Ascending aorta (tissue), 2 donors: ENCODE measurements at regions of chr1 and their contacts with region 1.

Region 1: GRCh38 chr1:206507284-206508129 is at the start of gene RASSF5:
- DNase-seq: peak; percentile 72 to 94
- H3K4me3 ChIP-seq: peak within 1 kb of the TSS; percentile 96 to 98
- H3K27ac ChIP-seq: peak within 1 kb of the TSS; percentile 65 to 75
- H3K4me1 ChIP-seq: peaks cover 8 to 44% of the 10 kb centered on the region in 2 donors
- H3K27me3 ChIP-seq: no peaks in the 10 kb centered on the region
- CTCF ChIP-seq: no peak
- total RNA-seq, gene RASSF5: 8.9 TPM

Region 2: DNA sequence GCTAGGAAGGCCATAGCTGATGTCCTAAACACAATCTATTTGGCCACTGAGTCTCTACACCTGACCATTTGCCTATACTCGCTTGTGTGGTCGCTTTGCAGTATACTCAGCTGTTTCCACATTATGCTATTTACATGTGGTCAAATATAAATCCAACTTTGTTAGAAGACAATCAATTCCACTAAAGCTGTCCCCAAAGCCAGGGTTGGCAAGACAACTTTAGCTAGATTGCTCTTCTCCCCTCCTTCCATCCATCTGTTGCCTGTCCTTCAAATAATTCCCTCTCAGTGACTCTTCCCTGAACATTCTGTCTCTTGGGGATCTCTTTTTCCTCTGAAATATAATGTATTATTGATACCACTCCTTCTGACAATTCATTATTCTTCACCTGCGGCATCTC is 420.4 kb before region 1 on chr1:
- intact Hi-C with region 1: no loop called
- DNase-seq: no peak
- H3K4me3 ChIP-seq: no peak overlapping the region
- H3K27ac ChIP-seq: no peak overlapping the region
- H3K4me1 ChIP-seq: no peaks in the 10 kb centered on the region
- H3K27me3 ChIP-seq: no peaks in the 10 kb centered on the region
- CTCF ChIP-seq: no peak

Region 3: GRCh38 chr1:206489980-206490770 is 17.3 kb before region 1 on chr1:
- intact Hi-C with region 1: no loop called
- DNase-seq: peak in 1 of 2 donors; percentile 90
- H3K4me3 ChIP-seq: no peak overlapping the region
- H3K27ac ChIP-seq: no peak overlapping the region
- H3K4me1 ChIP-seq: peaks cover 0 to 7% of the 10 kb centered on the region in 2 donors
- H3K27me3 ChIP-seq: no peaks in the 10 kb centered on the region
- CTCF ChIP-seq: peak; percentile 93 to 98 (median 98)

Region 4: DNA sequence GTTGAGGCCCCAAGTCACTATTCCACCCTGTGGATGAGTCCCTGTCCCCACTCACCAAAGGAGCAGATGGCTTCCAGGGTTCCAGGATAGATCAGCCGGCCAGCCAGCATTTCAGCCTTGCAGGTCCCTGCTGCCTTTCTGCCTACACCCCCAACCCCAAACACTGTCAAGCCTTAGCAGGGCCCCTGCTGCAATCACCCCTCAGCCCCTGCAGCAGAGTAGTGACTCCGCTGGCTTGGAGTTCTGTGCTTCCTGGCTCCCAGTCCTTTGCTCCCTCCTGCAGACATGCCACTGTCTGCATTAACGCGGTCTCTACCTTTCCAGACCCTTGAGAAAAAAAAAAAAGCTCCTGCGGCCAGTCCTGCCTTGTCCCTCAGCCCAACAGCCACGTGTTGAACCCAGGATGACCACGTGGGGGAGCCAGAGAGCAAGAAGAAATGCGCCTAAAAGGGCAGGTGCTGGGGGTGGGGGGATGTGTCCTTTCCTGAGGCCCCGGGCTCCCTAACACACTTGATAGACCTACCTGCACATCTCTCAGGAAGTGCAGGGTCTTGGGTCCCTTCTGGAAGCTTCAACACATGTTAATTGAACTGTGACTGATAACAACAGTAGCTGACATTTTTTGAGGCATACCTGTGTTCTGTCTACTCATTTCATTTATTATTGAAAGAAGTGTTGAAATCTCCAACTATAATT is 37.2 kb after region 1 on chr1:
- intact Hi-C with region 1: loop called (anchors 5 kb)
- DNase-seq: peak in 1 of 2 donors; percentile 83
- H3K4me3 ChIP-seq: no peak overlapping the region
- H3K27ac ChIP-seq: no peak overlapping the region
- H3K4me1 ChIP-seq: peaks cover 0 to 17% of the 10 kb centered on the region in 2 donors
- H3K27me3 ChIP-seq: no peaks in the 10 kb centered on the region
- CTCF ChIP-seq: peak; percentile 63 to 91 (median 83)

Region 5: DNA sequence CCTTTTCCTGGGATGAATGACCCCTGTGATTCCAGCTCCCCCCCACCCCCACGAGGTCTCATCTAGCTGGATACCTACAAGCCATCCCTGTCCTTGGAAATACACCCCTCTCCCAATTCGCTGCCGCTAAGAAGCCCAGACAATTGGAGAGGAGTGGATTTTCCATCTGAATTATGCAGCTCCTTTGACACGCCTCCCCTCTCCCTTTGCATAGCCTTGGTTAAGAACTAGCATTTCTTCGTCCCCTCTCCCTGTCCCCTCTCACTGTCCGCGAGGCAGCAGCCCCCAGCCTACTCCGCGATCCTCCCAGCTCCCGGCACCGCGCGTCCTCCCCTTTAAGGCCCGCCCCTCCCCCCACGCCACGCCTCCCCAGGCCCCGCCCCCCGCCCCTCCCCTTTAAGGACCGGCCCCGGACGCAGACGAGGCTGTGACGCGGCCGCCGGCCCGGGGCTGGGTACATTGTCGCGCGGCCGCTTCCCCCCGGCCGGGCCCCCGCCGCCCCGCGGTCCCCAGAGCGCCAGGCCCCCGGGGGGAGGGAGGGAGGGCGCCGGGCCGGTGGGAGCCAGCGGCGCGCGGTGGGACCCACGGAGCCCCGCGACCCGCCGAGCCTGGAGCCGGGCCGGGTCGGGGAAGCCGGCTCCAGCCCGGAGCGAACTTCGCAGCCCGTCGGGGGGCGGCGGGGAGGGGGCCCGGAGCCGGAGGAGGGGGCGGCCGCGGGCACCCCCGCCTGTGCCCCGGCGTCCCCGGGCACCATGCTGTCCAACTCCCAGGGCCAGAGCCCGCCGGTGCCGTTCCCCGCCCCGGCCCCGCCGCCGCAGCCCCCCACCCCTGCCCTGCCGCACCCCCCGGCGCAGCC is 177.2 kb after region 1 on chr1 and contains the start of gene MAPKAPK2:
- intact Hi-C with region 1: loop called (anchors 5 kb)
- DNase-seq: peak in 1 of 2 donors; percentile 88
- H3K4me3 ChIP-seq: peak within 1 kb of the TSS; percentile 72 to 89
- H3K27ac ChIP-seq: peak within 1 kb of the TSS; percentile 95 to 98
- H3K4me1 ChIP-seq: peaks cover 9 to 28% of the 10 kb centered on the region in 2 donors
- H3K27me3 ChIP-seq: no peaks in the 10 kb centered on the region
- CTCF ChIP-seq: no peak
- total RNA-seq, gene MAPKAPK2: 35.3 TPM

Region 6: DNA sequence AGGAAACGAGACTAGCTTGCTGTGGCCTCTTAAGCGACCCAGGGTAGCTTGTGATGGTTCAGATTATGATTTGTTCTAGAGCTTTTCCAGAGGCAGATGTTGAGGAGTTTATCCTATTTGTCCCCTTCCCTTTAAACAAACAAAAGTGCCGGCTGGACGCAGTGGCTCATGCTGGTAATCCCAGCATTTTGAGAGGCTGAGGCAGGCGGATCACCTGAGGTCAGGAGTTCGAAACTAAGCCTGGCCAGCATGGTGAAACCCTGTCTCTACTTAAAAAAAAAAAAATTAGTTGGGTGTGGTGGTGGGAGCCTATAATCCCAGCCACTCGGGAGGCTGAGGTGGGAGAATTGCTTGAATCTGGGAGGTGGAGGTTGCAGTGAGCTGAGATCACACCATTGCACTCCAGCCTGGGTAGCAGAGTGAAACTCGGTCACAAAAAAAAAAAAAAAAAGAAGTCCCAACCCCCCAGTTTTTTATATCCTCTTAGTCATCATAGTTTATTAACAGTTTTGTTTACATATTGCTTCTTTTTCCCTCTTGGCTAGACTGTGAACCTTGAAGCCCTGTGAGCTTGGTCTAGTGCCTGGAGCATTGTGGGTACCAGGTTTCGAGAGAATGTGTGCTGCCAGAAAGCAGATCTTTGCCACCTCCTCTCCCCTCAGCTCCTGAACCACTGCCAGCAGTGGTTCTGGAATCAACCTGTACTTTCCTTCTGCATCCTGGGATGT is 207.0 kb after region 1 on chr1:
- intact Hi-C with region 1: no loop called
- DNase-seq: no peak
- H3K4me3 ChIP-seq: no peak overlapping the region
- H3K27ac ChIP-seq: peak overlapping the region; percentile 41 to 51
- H3K4me1 ChIP-seq: peaks cover 4 to 32% of the 10 kb centered on the region in 2 donors
- H3K27me3 ChIP-seq: no peaks in the 10 kb centered on the region
- CTCF ChIP-seq: no peak

Region 7: DNA sequence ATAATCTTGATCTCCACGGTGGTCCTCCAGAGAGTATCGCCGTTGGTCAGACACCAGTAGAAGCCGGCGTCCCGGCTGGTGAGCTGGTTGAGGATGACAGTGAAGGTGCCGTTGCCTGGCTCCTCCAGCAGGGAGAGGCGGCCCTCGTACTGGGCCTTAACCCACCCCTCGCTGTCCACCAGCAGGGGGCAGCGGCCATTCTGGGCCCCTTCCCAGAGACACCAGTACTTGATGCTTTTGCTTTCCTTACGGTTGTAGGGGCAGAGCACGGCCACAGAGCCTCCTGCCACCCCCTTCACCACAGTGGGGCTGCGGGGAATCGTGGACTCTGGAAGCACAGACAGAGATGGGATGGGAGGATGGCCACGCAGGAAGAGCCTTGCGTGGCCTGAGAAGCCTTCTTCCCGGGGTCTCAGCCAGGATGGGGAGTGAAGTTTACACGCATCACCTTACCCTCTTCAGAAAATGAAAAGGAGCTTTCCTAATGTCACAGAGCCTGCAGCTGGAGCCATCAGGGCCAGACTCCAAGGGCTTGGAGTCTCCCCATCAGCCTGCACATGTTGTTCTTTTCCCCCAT is 428.1 kb after region 1 on chr1:
- intact Hi-C with region 1: no loop called
- DNase-seq: no peak
- H3K4me3 ChIP-seq: no peak overlapping the region
- H3K27ac ChIP-seq: no peak overlapping the region
- H3K4me1 ChIP-seq: no peaks in the 10 kb centered on the region
- H3K27me3 ChIP-seq: no peaks in the 10 kb centered on the region
- CTCF ChIP-seq: peak in 2 of 3 experiments; percentile 19 to 34

Region 8: DNA sequence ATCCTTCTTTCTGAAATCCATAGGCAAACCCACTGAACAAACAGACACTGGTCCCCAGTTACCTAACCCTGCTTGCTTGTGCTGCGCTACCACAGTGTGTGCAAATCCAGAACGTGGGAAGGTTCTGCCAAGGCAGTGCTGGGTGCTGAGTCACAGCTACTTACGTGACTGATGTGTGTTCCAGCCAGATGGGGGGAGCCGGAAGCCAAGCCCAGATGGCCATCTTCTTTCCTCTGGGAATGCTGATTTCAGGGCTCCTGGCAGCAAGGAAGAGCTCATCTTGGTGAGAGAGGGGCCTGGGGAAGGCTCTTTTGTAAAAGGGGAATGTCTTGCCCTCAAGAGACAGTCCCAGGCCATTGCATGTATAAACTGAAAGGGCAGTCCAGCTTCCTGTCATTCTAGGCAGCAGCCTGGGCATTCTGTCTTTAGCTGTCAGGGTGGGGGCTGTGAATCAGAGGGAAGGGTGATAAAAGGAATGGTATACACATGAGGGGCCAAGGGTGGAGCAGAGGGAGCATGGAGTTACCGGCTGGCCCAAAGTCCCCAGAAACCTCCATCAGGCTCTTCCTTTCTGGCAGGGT is 1298.4 kb after region 1 on chr1:
- intact Hi-C with region 1: loop called (anchors 10 kb)
- DNase-seq: peak in 1 of 2 donors; percentile 93
- H3K4me3 ChIP-seq: peak overlapping the region in 1 of 2 donors; percentile 12
- H3K27ac ChIP-seq: peak overlapping the region; percentile 92 to 98
- H3K4me1 ChIP-seq: peaks cover 32 to 66% of the 10 kb centered on the region in 2 donors
- H3K27me3 ChIP-seq: no peaks in the 10 kb centered on the region
- CTCF ChIP-seq: no peak

Region 9: DNA sequence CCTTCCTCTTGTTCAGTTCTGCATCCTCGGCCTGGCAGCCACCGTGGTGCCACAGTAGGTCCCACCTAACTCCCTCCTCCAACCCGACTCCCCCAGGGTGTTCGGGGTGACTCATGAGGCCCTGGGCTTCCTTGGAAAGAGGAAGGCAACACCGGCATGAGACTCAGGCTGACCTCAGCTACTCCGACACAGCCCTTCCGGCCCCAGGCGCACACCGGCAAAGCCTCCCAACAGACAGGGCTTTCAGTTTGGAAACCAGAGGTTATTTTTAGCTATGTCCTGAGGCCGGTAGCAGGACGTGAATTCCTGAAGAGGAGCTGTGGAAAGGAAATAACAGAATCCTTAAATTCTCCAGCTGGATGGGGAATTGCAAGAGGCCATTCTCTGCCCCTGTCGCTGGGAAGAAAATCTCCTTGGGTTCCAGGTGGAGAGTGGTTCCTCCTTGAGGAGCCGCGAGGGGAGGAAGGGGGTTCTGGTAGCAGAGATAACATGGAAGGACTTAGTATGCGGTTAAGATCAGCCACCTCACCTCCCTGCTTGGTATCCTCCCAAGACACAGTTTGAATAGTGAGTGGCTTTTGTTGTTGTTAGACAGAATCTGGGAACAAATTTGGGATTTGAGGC is 1712.3 kb after region 1 on chr1:
- intact Hi-C with region 1: loop called (anchors 10 kb)
- DNase-seq: peak; percentile 69 to 93
- H3K4me3 ChIP-seq: no peak overlapping the region
- H3K27ac ChIP-seq: peak overlapping the region; percentile 81 to 92
- H3K4me1 ChIP-seq: peaks cover 16 to 46% of the 10 kb centered on the region in 2 donors
- H3K27me3 ChIP-seq: no peaks in the 10 kb centered on the region
- CTCF ChIP-seq: no peak